ENCODE measurements at regions of chr20 and their contacts with region 1.

Region 1: DNA sequence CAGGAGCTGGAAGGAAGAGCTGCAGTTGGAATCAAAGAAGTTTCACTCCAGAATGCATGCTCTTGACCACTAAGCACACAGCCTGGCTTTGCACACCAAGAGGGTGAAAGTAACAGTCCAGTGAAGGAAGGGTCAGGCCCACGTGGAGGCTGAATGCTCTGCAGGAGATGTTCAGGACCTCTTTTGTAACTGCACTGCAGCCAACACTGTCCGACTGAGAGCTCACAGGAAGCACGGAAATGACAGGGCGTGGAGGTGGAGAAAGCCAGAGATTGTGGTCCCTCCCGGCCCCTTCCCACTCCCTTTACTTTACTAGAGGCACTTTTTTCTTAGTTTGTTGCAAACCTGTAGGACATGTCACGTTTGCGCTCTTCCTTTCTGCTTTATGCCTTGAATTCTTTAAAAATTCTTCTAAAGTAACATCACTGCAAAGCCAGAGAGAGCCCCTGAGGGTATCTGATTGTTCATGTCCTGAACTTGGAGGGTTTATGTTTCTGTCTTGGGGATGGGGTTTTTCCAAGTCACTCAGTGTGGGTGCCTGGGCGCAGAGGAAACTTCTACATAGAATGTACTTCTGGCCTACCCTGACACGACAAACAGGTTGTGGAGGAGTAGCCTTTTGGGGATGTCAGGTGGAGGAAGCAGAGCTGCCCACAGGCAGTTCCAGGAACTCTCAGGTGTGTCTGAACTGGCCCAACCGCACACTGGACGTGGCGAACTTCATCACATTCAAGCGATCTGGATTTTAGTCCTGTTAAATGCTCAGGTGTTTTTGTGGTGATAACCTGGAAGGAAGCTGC is 40.9 kb downstream of the JAG1 start:
- DNase-seq: no peak
- H3K4me3 ChIP-seq: no peak overlapping the region
- H3K27ac ChIP-seq: no peak overlapping the region
- H3K4me1 ChIP-seq: peaks cover 20 to 21% of the 10 kb centered on the region in 2 experiments
- H3K27me3 ChIP-seq: no peaks in the 10 kb centered on the region
- CTCF ChIP-seq: no peak
- EP300 ChIP-seq: no peak
- RAD21 ChIP-seq: no peak

Region 2: DNA sequence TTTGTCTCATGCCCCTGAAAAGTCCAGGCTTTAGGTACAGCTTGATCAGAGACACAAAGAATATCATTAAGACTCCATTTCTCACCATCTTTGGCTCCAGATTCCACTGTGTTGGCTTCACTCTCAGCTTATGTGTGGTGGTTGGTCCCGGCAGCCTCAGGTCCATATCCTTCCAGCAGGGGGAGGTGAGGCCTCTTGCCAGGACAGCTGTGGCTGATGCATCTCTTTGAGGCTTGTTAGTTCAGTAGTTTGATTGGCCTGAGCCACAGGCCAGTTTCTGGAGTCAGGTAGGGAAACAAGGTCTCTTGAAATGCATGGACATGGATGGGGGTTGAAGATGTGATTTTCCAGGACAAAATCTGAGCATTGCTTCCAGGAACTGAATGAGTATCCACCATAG is 21.6 kb before region 1 on chr20:
- CTCF ChIA-PET with region 1: no interaction called
- POLR2A ChIA-PET with region 1: no interaction called
- DNase-seq: peak; percentile 38
- H3K4me3 ChIP-seq: no peak overlapping the region
- H3K27ac ChIP-seq: peak overlapping the region in 1 of 2 experiments; percentile 98; a peak in 1 of 4 replicates
- H3K4me1 ChIP-seq: peaks cover 10 to 12% of the 10 kb centered on the region in 2 experiments; a peak in 3 of 4 replicates
- H3K27me3 ChIP-seq: no peaks in the 10 kb centered on the region
- CTCF ChIP-seq: peak; percentile 52
- EP300 ChIP-seq: no peak
- RAD21 ChIP-seq: peak; percentile 56

Region 3: GRCh38 chr20:10644458-10645204 is 11.7 kb after region 1 on chr20:
- CTCF ChIA-PET with region 1: interaction called, 10 read pairs
- POLR2A ChIA-PET with region 1: no interaction called
- DNase-seq: peak; percentile 74
- H3K4me3 ChIP-seq: no peak overlapping the region
- H3K27ac ChIP-seq: peak overlapping the region; percentile 62 to 81; a peak in 3 of 4 replicates
- H3K4me1 ChIP-seq: peaks cover 7 to 56% of the 10 kb centered on the region in 2 experiments; a peak in 3 of 4 replicates
- H3K27me3 ChIP-seq: no peaks in the 10 kb centered on the region
- CTCF ChIP-seq: no peak
- EP300 ChIP-seq: peak in 1 of 2 experiments; percentile 70; a peak in 2 of 4 replicates
- RAD21 ChIP-seq: no peak

Measured in SK-N-SH (cell line).